ENCODE measurements at regions of chr11 and their contacts with region 1.

Region 1: GRCh38 chr11:66891851-66892660 is 35.2 kb downstream of the LRFN4 start:
- DNase-seq: peak; percentile 98
- H3K4me3 Mint-ChIP-seq: peak overlapping the region; percentile 61
- H3K27ac Mint-ChIP-seq: peak overlapping the region; percentile 92
- H3K4me1 Mint-ChIP-seq: peaks cover 23% of the 10 kb centered on the region
- H3K27me3 Mint-ChIP-seq: no peaks in the 10 kb centered on the region
- CTCF ChIP-seq: no peak

Region 2: GRCh38 chr11:66850207-66850587 is 41.9 kb before region 1 on chr11:
- CTCF ChIA-PET with region 1: no interaction called
- POLR2A ChIA-PET with region 1: no interaction called
- intact Hi-C with region 1: no loop called
- DNase-seq: no peak
- H3K4me3 Mint-ChIP-seq: no peak overlapping the region
- H3K27ac Mint-ChIP-seq: peak overlapping the region; percentile 69
- H3K4me1 Mint-ChIP-seq: peaks cover 3% of the 10 kb centered on the region
- H3K27me3 Mint-ChIP-seq: no peaks in the 10 kb centered on the region
- CTCF ChIP-seq: no peak

Region 3: GRCh38 chr11:66880496-66881455 is 11.3 kb before region 1 on chr11:
- CTCF ChIA-PET with region 1: interaction called, 8 read pairs
- POLR2A ChIA-PET with region 1: interaction called, 10 read pairs
- intact Hi-C with region 1: no loop called
- DNase-seq: peak; percentile 93
- H3K4me3 Mint-ChIP-seq: no peak overlapping the region
- H3K27ac Mint-ChIP-seq: peak overlapping the region; percentile 54
- H3K4me1 Mint-ChIP-seq: peaks cover 46% of the 10 kb centered on the region
- H3K27me3 Mint-ChIP-seq: no peaks in the 10 kb centered on the region
- CTCF ChIP-seq: no peak

Region 4: DNA sequence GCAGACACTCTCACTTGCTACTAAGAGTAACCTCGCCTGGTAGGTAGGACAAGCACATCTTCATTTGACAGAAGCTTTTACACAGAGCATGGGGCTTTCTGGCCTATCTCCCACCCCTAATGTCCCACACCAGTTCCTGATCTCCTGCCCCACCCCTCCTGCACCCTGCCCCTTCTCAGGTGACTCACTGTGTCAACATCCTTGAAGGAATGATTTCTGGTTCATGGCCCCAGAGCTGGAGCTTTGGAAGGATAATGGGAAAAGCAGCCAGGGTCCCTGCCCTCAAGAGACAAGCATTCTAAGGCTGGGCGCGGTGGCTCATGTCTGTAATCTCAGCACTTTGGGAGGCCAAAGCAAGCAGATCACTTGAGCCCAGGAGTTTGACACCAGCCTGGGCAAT is 12.0 kb after region 1 on chr11:
- CTCF ChIA-PET with region 1: no interaction called
- POLR2A ChIA-PET with region 1: interaction called, 10 read pairs
- intact Hi-C with region 1: no loop called
- DNase-seq: peak; percentile 57
- H3K4me3 Mint-ChIP-seq: no peak overlapping the region
- H3K27ac Mint-ChIP-seq: peak overlapping the region; percentile 73
- H3K4me1 Mint-ChIP-seq: peaks cover 37% of the 10 kb centered on the region
- H3K27me3 Mint-ChIP-seq: no peaks in the 10 kb centered on the region
- CTCF ChIP-seq: no peak

Region 5: GRCh38 chr11:66915046-66915832 is 23.2 kb after region 1 on chr11:
- CTCF ChIA-PET with region 1: no interaction called
- POLR2A ChIA-PET with region 1: no interaction called
- intact Hi-C with region 1: no loop called
- DNase-seq: no peak
- H3K4me3 Mint-ChIP-seq: no peak overlapping the region
- H3K27ac Mint-ChIP-seq: no peak overlapping the region
- H3K4me1 Mint-ChIP-seq: peaks cover 6% of the 10 kb centered on the region
- H3K27me3 Mint-ChIP-seq: no peaks in the 10 kb centered on the region
- CTCF ChIP-seq: no peak